HepG2 (cell line): ENCODE measurements at regions of chr1 and their contacts with region 1.

Region 1: DNA sequence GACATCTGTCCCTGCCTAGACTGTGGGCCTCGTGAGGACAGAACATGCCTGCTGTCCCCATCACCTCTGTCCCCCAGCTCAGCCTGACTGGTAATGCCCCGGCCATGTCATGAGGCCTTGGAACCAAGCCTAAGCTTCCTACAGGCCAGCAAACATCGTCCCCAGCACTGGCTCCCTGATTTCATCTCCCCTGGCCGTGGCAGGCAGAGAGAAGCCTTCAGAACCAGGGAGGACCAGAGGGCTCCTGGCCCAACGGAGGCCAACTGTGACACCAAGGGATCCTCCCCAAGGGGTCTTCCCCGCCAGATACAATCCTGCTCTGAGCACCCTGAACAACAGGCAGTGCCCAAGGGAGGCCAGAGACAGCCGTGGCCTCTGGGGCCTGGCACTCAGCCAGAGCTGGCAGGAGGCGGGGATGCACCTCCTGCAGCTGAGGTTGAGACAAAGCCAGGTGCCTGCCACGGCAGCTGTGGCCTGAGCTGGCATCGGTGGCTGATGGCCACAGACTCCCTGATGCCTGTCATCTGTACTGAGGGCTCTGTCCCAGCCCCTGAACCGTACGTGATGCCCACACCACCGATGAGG is 9.9 kb upstream of the NPHP4 start:
- DNase-seq: no peak
- ATAC-seq: peak; percentile 46
- H3K4me3 ChIP-seq: peak overlapping the region in 1 of 3 experiments; percentile 68; a peak in 2 of 6 replicates
- H3K27ac ChIP-seq: no peak overlapping the region
- H3K4me1 ChIP-seq: peaks cover 54% of the 10 kb centered on the region
- H3K27me3 ChIP-seq: peaks cover 0 to 4% of the 10 kb centered on the region in 2 experiments; a peak in 1 of 5 replicates
- CTCF ChIP-seq: no peak
- EP300 ChIP-seq: no peak
- POLR2A ChIP-seq: no peak
- RAD21 ChIP-seq: no peak

Region 2: DNA sequence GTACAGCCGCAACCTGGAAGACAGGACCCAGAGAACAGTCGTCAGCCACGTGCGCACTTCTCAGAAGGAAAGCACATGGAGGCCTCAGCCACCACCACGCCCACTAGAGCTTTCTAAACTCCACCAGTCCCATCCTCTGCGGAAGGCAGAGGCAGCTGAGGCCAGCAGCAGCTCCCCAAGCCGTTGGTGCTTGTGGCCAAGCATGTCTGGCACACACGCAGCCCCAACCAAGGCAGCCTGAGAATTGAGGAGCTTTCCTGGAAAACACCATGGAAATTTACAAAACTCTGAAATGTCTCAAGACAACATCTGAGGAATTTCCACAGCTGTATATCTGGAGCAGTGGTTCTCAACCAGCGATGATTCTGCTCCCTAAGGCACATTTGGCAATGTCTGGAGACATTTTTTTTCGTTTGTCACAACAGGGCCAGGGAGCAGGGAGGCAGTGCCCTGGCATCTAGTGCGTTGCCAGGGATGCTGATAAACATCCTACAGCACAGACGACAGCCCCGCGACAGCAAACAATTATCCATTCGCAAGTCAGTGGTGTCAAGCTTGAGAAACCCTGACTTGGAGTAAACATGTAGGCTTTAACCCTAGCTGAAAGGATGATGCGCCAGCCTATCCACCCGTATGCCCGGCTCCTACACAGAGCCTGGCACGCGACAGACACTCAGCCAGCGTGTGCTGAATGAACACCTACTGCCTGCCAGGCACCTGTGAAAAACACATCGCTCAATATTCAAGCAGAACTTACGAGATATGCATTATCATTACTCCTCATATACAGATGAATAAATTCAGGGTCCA is 34.5 kb before region 1 on chr1:
- CTCF ChIA-PET with region 1: no interaction called
- POLR2A ChIA-PET with region 1: no interaction called
- in situ Hi-C with region 1: no loop called
- intact Hi-C with region 1: no loop called
- DNase-seq: no peak
- ATAC-seq: no peak
- H3K4me3 ChIP-seq: no peak overlapping the region
- H3K27ac ChIP-seq: no peak overlapping the region
- H3K4me1 ChIP-seq: peaks cover 14% of the 10 kb centered on the region
- H3K27me3 ChIP-seq: no peaks in the 10 kb centered on the region; a peak in 1 of 5 replicates
- CTCF ChIP-seq: no peak
- EP300 ChIP-seq: no peak
- POLR2A ChIP-seq: no peak
- RAD21 ChIP-seq: no peak

Region 3: DNA sequence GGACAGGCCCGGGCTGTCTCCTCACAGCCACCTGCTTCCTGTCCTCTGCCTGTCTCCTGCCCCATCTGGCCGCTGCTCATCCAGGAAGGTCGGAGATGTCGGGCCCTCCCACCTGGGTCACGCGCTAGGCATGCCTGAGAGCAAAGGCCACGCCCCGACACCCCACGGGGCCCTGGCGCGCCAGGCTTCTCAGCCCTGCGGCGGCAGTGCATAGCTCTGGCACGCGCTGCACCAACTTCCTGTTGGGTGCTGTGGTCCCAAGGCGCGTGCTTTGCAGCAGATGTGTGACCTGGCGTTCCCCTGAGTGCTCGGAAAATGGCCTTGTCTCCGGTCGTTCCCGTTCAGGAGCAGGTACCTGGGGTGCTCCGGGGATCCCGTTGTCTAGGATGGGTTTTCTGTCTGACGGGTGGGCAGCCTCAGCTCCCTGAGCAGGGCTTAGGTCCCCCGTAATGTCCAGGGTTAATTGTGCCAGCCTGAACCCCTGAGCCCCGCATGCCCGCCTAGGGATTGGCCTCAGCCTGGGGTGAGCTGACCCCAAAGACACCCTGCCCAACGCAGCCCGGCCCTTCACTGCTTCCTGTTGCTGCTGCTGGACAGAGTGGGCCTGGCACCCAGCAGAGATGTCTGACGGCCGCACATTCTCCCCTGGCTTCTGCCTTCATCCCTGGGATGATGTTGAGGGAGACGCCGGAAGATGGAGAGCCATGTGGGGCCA is 24.2 kb after region 1 on chr1:
- CTCF ChIA-PET with region 1: no interaction called
- POLR2A ChIA-PET with region 1: interaction called, 9 read pairs
- in situ Hi-C with region 1: no loop called
- intact Hi-C with region 1: loop called (anchors 2 kb)
- DNase-seq: peak; percentile 70
- ATAC-seq: peak; percentile 92
- H3K4me3 ChIP-seq: peak overlapping the region; percentile 48 to 73 (median 48); a peak in 5 of 6 replicates
- H3K27ac ChIP-seq: no peak overlapping the region
- H3K4me1 ChIP-seq: peaks cover 38% of the 10 kb centered on the region
- H3K27me3 ChIP-seq: peaks cover 0 to 1% of the 10 kb centered on the region in 2 experiments; a peak in 1 of 5 replicates
- CTCF ChIP-seq: no peak; the same call in 1 of the 2 replicates
- EP300 ChIP-seq: no peak
- POLR2A ChIP-seq: peak; percentile 73 to 83
- RAD21 ChIP-seq: no peak